RWPE1 (cell line): ENCODE measurements at regions of chr2 and their contacts with region 1.

Region 1: DNA sequence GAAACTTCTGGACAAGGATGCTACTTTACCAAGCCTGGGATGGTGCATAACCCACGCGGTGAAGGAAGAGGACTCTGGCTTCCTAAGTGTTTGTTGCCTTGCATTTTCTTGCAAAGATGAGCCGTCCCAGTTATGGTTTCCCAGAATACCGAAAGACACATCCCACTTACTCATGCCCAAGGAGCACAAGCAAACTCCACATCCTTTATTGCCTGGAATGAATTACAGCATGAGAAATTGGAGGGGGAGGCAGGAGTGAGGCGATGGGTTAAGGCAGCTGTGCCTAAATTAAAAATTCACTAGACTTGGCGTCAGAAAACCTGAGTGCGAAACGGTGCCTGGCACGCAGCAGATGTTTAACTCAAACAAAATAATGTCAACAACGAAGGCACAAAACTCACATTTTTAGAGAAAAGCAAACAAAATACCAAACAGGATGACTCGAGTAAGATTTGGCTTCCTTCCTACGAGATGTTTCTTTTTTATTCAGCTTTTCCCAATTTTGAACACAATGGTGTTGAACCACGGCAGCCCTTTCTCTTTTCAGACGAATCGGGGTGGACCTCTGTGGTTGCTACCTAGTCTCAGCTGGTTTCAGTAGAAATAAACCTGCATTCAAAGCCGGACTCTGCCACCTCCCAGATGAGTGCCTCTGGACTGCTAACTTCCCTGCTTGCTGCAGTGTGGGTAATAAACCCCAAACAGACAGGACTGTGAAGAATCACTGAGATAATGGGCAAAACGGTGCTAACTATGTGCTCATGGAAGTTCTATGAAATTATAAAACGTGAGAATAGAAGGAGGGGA is 100.3 kb upstream of the NCK2 start:
- DNase-seq: no peak
- H3K27ac ChIP-seq: no peak overlapping the region
- CTCF ChIP-seq: no peak

Region 2: DNA sequence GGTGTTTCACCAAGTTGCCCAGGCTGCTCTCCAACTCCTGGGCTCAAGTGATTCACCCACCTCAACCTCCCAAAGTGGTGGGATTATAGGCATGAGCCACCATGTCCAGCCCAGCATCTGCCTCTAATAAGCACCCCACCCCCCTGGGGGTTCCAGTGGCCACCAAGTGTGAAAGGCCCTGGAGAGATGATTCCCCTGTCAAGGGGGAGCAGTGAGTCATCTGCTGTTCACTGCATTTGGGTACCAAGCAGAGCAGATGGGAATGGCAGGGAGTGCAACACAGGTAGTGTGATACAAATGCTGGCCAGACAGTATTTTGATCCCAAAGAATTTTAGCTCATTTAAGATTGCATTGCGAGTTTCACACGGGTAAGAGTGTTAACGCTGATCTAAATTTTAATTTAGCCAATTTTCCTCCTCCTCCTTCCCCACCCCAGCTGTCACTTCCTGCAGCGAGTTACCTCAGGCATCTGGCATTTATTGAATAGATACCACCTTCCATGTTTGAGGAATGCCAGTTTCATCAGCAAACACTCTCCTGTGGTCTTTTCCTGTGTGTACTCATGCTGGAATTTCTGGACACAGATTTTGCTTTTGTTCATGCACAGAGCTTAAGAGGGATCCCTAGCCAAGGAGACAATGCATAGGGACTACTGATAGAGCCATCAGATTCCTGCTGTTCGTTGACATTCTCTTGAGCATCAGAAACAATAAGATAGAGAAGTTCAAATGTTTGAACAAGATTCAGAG is 68.0 kb after region 1 on chr2:
- CTCF ChIA-PET with region 1: no interaction called
- POLR2A ChIA-PET with region 1: interaction called, 13 read pairs
- DNase-seq: peak; percentile 35
- H3K27ac ChIP-seq: peak overlapping the region; percentile 94
- CTCF ChIP-seq: no peak